Naive thymus-derived CD4-positive, alpha-beta T cell (primary cell): ENCODE measurements at regions of chr11 and their contacts with region 1.

Region 1: DNA sequence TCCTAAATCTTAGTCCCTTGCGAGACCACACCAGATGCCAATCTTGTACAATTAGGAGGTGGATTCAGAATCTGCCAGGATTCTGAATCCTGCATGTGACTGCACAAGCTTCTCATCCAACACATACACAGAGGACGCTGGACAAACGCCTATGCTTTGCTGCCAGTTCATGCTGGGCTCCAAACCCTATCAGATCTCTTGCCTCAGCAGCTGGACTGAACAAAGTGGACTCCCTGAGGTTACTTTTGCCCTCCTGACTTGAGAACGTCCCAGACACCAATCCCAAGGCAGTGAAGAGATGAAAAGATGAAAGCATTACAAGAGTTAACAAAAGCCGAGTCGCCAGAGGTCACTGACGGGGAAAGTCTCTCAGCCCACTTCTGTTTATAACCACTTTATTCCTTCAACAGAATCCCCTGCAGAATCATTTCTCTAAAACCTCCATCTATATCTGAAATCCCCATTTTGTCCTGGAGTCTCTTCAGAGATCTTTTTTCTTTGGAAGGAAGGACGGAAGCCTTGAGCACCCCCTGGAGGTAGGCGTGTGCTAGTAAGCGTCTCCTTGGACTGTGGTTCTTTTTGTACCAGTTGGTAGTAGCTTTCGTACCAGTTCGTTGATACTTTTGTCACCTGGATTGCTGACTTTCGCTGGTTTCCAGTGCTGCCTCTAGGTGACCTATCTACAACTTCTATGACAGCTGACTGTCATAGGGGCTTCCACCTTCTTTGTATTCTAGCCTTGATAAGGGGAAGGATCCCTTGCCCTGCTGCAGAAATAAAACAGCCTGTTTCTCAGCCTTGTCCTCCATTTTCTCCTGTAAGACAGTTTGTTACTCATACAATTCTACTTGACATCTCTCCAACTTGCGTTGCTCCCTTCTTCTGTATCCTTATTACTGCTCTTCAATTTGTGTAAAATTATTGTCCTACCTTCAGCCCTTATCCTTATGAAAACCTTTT is 26.1 kb upstream of the EED start:
- DNase-seq: peak in 8 of 9 donors; percentile 17 to 54 (median 42)
- ATAC-seq: peak; percentile 92
- H3K4me3 ChIP-seq: peak overlapping the region; percentile 32
- H3K4me3 Mint-ChIP-seq: peak overlapping the region; percentile 32 to 79 (median 67)
- H3K27ac ChIP-seq: no peak overlapping the region
- H3K27ac Mint-ChIP-seq: peak overlapping the region in 2 of 9 donors; percentile 44 to 45
- H3K4me1 ChIP-seq: no peaks in the 10 kb centered on the region
- H3K4me1 Mint-ChIP-seq: peaks cover 4 to 42% (median 12%) of the 10 kb centered on the region in 7 donors
- H3K27me3 ChIP-seq: no peaks in the 10 kb centered on the region
- H3K27me3 Mint-ChIP-seq: peaks cover 0 to 12% (median 5%) of the 10 kb centered on the region in 5 donors

Region 2: GRCh38 chr11:85941380-85941973 is 276.9 kb before region 1 on chr11:
- CTCF ChIA-PET with region 1: no interaction called
- POLR2A ChIA-PET with region 1: no interaction called
- intact Hi-C with region 1: loop called in 1 of 2 experiments (anchors 1 kb)
- DNase-seq: no peak
- ATAC-seq: peak; percentile 61
- H3K4me3 ChIP-seq: no peak overlapping the region
- H3K4me3 Mint-ChIP-seq: no peak overlapping the region
- H3K27ac ChIP-seq: no peak overlapping the region
- H3K27ac Mint-ChIP-seq: no peak overlapping the region
- H3K4me1 ChIP-seq: no peaks in the 10 kb centered on the region
- H3K4me1 Mint-ChIP-seq: peaks cover 0 to 10% (median 0%) of the 10 kb centered on the region in 7 donors
- H3K27me3 ChIP-seq: no peaks in the 10 kb centered on the region
- H3K27me3 Mint-ChIP-seq: no peaks in the 10 kb centered on the region

Region 3: DNA sequence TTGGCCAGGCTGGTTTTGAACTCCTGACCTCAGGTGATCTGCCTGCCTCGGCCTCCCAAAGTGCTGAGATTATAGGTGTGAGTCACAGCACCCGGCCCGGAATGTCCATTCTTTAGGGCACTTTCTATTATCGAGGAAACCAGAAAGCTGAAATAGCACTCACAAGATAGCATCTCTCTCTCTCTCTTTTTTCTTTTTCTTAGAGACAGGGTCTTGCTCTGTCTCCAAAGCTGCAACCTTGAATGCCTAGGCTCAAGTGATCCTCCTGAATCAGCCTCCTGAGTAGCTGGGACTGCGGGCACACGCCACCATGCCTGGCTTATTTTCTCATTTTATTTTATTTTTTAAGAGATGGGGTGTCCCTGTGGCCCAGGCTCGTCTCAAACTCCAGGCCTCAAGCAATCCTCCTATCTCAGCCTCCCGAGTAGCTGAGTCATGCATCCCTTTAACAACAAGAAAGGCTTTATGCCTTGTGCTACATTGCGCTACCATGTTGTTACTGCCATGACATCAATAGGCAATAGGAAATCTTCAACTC is 18.9 kb after region 1 on chr11:
- CTCF ChIA-PET with region 1: no interaction called
- POLR2A ChIA-PET with region 1: no interaction called
- intact Hi-C with region 1: no loop called
- DNase-seq: no peak
- ATAC-seq: no peak
- H3K4me3 ChIP-seq: no peak overlapping the region
- H3K4me3 Mint-ChIP-seq: no peak overlapping the region
- H3K27ac ChIP-seq: no peak overlapping the region
- H3K27ac Mint-ChIP-seq: no peak overlapping the region
- H3K4me1 ChIP-seq: no peaks in the 10 kb centered on the region
- H3K4me1 Mint-ChIP-seq: peaks cover 0 to 3% (median 0%) of the 10 kb centered on the region in 7 donors
- H3K27me3 ChIP-seq: no peaks in the 10 kb centered on the region
- H3K27me3 Mint-ChIP-seq: peaks cover 0 to 13% (median 5%) of the 10 kb centered on the region in 5 donors

Region 4: GRCh38 chr11:86278226-86278625 is 59.8 kb after region 1 on chr11:
- CTCF ChIA-PET with region 1: no interaction called
- POLR2A ChIA-PET with region 1: no interaction called
- intact Hi-C with region 1: no loop called
- DNase-seq: no peak
- ATAC-seq: no peak
- H3K4me3 ChIP-seq: no peak overlapping the region
- H3K4me3 Mint-ChIP-seq: no peak overlapping the region
- H3K27ac ChIP-seq: no peak overlapping the region
- H3K27ac Mint-ChIP-seq: no peak overlapping the region
- H3K4me1 ChIP-seq: no peaks in the 10 kb centered on the region
- H3K4me1 Mint-ChIP-seq: peaks cover 8 to 31% (median 15%) of the 10 kb centered on the region in 7 donors
- H3K27me3 ChIP-seq: no peaks in the 10 kb centered on the region
- H3K27me3 Mint-ChIP-seq: no peaks in the 10 kb centered on the region